ENCODE measurements at regions of chr10 and their contacts with region 1.

Region 1: GRCh38 chr10:23158370-23158769 is 33.7 kb upstream of the PTF1A start:
- DNase-seq: no peak
- ATAC-seq: peak; percentile 78
- H3K4me3 ChIP-seq: no peak overlapping the region
- H3K27ac ChIP-seq: no peak overlapping the region
- H3K4me1 ChIP-seq: peaks cover 6% of the 10 kb centered on the region; the same call in 1 of the 2 replicates
- H3K27me3 ChIP-seq: peaks cover 0 to 4% of the 10 kb centered on the region in 2 experiments; a peak in 1 of 4 replicates
- CTCF ChIP-seq: peak; percentile 84 to 87 (median 86); a peak in 5 of 6 replicates
- EP300 ChIP-seq: no peak; a peak in 1 of 4 replicates
- POLR2A ChIP-seq: no peak
- RAD21 ChIP-seq: peak; percentile 76

Region 2: GRCh38 chr10:23146258-23146657 is 12.1 kb before region 1 on chr10:
- CTCF ChIA-PET with region 1: interaction called, 19 read pairs
- POLR2A ChIA-PET with region 1: no interaction called
- RAD21 ChIA-PET with region 1: no interaction called
- SMC1A ChIA-PET with region 1: interaction called, 5 read pairs
- in situ Hi-C with region 1: no loop called
- intact Hi-C with region 1: no loop called
- DNase-seq: no peak
- ATAC-seq: no peak
- H3K4me3 ChIP-seq: no peak overlapping the region
- H3K27ac ChIP-seq: no peak overlapping the region
- H3K4me1 ChIP-seq: no peaks in the 10 kb centered on the region; the same call in 1 of the 2 replicates
- H3K27me3 ChIP-seq: no peaks in the 10 kb centered on the region
- CTCF ChIP-seq: no peak
- EP300 ChIP-seq: no peak
- POLR2A ChIP-seq: no peak
- RAD21 ChIP-seq: no peak

Region 3: DNA sequence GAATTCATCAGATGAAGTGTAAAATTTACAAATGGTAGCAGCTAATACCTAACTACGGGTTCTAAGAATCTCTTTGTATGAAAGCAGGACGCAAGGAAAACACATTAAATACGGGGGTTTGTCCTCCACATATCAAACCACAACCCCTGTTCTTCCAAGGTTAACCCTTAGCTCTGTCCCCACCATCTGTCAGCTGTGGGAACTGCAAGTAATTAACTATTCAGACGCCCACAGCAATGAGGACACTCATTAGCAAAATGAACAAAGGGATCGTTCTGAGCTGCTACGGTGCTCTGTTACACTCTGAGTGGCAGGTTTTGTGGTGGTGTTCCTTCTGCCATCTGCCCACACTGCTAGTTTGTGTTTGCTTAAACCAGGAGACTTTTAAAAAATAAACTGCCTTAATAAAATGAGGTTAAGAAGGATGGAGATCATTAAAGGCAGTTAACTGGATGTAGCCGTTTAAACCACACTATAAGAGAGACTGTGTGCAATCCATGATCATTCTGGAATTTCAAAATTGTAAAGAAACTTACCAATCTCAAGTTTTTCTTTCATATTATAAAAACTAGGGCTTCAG is 134.9 kb after region 1 on chr10:
- CTCF ChIA-PET with region 1: interaction called, 106 read pairs
- POLR2A ChIA-PET with region 1: no interaction called
- RAD21 ChIA-PET with region 1: interaction called, 24 read pairs
- SMC1A ChIA-PET with region 1: interaction called, 19 read pairs
- in situ Hi-C with region 1: loop called (anchors 5 kb)
- intact Hi-C with region 1: loop called (anchors 1 kb)
- DNase-seq: peak; percentile 4
- ATAC-seq: peak; percentile 93
- H3K4me3 ChIP-seq: no peak overlapping the region
- H3K27ac ChIP-seq: no peak overlapping the region
- H3K4me1 ChIP-seq: no peaks in the 10 kb centered on the region
- H3K27me3 ChIP-seq: no peaks in the 10 kb centered on the region; a peak in 1 of 4 replicates
- CTCF ChIP-seq: peak; percentile 68 to 70 (median 69)
- EP300 ChIP-seq: no peak
- POLR2A ChIP-seq: no peak
- RAD21 ChIP-seq: peak; percentile 61

Region 4: GRCh38 chr10:23525406-23525805 is 367.0 kb after region 1 on chr10:
- CTCF ChIA-PET with region 1: interaction called, 5 read pairs
- POLR2A ChIA-PET with region 1: no interaction called
- RAD21 ChIA-PET with region 1: no interaction called
- SMC1A ChIA-PET with region 1: interaction called, 3 read pairs
- in situ Hi-C with region 1: no loop called
- intact Hi-C with region 1: loop called (anchors 5 kb)
- DNase-seq: no peak
- ATAC-seq: peak; percentile 72
- H3K4me3 ChIP-seq: no peak overlapping the region
- H3K27ac ChIP-seq: no peak overlapping the region
- H3K4me1 ChIP-seq: no peaks in the 10 kb centered on the region
- H3K27me3 ChIP-seq: no peaks in the 10 kb centered on the region
- CTCF ChIP-seq: peak; percentile 22 to 52 (median 50); a peak in 5 of 6 replicates
- EP300 ChIP-seq: no peak
- POLR2A ChIP-seq: no peak
- RAD21 ChIP-seq: peak; percentile 68

Region 5: GRCh38 chr10:23702977-23703414 is 544.6 kb after region 1 on chr10:
- CTCF ChIA-PET with region 1: no interaction called
- POLR2A ChIA-PET with region 1: no interaction called
- RAD21 ChIA-PET with region 1: interaction called, 3 read pairs
- SMC1A ChIA-PET with region 1: no interaction called
- in situ Hi-C with region 1: no loop called
- intact Hi-C with region 1: loop called (anchors 2 kb)
- DNase-seq: no peak
- ATAC-seq: peak; percentile 98
- H3K4me3 ChIP-seq: no peak overlapping the region
- H3K27ac ChIP-seq: no peak overlapping the region
- H3K4me1 ChIP-seq: no peaks in the 10 kb centered on the region
- H3K27me3 ChIP-seq: no peaks in the 10 kb centered on the region; a peak in 1 of 4 replicates
- CTCF ChIP-seq: peak; percentile 69 to 78 (median 75)
- EP300 ChIP-seq: no peak
- POLR2A ChIP-seq: no peak
- RAD21 ChIP-seq: peak; percentile 82

Region 6: GRCh38 chr10:24556750-24557742 is 1398.7 kb after region 1 on chr10:
- CTCF ChIA-PET with region 1: no interaction called
- POLR2A ChIA-PET with region 1: no interaction called
- RAD21 ChIA-PET with region 1: no interaction called
- SMC1A ChIA-PET with region 1: interaction called, 3 read pairs
- in situ Hi-C with region 1: no loop called
- intact Hi-C with region 1: loop called (anchors 1 kb)
- DNase-seq: no peak
- ATAC-seq: peak; percentile 77
- H3K4me3 ChIP-seq: no peak overlapping the region
- H3K27ac ChIP-seq: no peak overlapping the region
- H3K4me1 ChIP-seq: no peaks in the 10 kb centered on the region
- H3K27me3 ChIP-seq: no peaks in the 10 kb centered on the region; a peak in 1 of 4 replicates
- CTCF ChIP-seq: peak; percentile 61 to 65 (median 61); a peak in 5 of 6 replicates
- EP300 ChIP-seq: no peak
- POLR2A ChIP-seq: no peak
- RAD21 ChIP-seq: peak; percentile 75